ENCODE measurements at regions of chr1 and their contacts with region 1.

Region 1: GRCh38 chr1:17507916-17508315 is 31.6 kb upstream of the ARHGEF10L start:
- DNase-seq: peak in 1 of 2 experiments; percentile 52
- ATAC-seq: peak; percentile 76 to 88; a peak in 4 of 6 replicates
- H3K4me3 ChIP-seq: no peak overlapping the region
- H3K27ac ChIP-seq: no peak overlapping the region
- H3K4me1 ChIP-seq: no peaks in the 10 kb centered on the region
- CTCF ChIP-seq: no peak
- EP300 ChIP-seq: no peak
- POLR2A ChIP-seq: no peak
- RAD21 ChIP-seq: no peak

Region 2: DNA sequence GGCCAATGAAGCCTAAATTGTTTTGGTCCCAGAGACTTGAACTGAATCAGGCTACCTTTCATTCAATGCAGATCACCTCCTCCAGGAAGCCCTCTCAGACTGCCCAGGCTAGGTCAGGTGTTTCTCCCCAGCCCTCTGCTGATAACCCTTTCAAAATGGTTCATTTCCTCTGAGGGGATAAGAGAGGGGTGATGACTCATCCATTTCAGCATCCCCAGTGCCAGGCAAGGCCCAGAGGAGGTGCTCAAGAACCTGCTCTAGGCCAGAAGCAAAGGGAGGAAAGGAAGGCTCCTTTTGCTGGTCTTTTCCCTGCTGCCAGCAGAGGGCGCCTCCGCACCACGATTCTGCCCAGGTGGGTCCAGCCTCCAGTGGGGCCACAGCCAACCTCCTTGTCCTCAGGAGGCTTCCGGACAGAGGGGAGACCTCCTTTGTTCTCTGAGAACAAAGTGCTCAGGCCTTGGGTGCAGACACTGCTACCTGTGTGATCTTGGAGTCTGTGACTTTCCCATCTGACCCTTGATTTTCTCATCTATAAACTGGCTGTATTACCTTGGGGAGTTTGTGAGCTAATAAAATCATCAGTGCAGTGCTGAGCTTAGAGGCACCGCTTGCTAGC is 13.7 kb before region 1 on chr1:
- CTCF ChIA-PET with region 1: interaction called, 18 read pairs
- POLR2A ChIA-PET with region 1: no interaction called
- DNase-seq: peak; percentile 78 to 81
- ATAC-seq: peak; percentile 98 to 99
- H3K4me3 ChIP-seq: no peak overlapping the region
- H3K27ac ChIP-seq: no peak overlapping the region
- H3K4me1 ChIP-seq: peaks cover 14% of the 10 kb centered on the region; the same call in 2 of the 3 replicates
- CTCF ChIP-seq: peak; percentile 90
- EP300 ChIP-seq: no peak
- POLR2A ChIP-seq: no peak
- RAD21 ChIP-seq: peak; percentile 90 to 92

Region 3: DNA sequence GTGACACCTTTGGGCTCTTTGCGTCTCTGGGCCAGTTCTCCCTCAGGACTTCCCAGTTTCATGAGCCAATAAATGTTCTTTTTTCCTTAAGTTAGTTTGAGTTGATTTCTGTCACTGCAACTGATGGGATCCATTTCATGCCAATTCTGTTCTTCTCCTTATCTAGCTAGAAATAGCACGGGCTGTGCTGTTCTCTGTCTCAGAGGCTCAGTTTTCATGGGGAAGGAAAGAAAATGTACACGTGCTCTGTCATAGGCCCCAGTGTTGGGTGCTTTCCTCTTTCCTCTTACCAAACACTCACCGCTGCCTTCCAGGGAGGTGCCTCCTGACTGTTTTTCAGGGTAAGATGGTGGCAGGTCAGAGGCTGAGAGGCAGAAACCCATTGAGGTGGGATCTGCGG is 204.0 kb after region 1 on chr1:
- CTCF ChIA-PET with region 1: no interaction called
- POLR2A ChIA-PET with region 1: no interaction called
- DNase-seq: no peak
- ATAC-seq: no peak
- H3K4me3 ChIP-seq: no peak overlapping the region
- H3K27ac ChIP-seq: no peak overlapping the region
- H3K4me1 ChIP-seq: no peaks in the 10 kb centered on the region
- CTCF ChIP-seq: no peak
- EP300 ChIP-seq: no peak
- POLR2A ChIP-seq: no peak
- RAD21 ChIP-seq: no peak